Transverse colon (tissue), 4 donors: ENCODE measurements at regions of chr1 and their contacts with region 1.

Region 1: DNA sequence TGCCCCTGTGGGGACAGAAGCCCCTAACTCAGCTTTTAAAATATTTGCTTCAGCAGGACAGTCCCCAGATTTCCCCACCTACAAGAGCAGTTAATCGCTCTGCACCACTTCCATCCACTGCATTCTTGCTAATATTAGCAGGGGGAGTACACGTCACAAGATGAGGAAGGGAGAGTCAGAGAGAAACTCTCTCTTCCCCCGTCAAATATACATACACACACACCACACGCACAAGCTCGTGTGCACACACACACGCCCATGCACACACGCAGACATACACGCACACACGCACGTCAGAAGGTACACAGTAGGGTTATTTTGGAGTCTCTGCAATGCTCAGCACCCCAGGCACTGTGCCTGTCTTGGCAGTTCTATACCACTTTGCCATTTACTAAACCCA is 2.1 kb downstream of the CLCA1 start:
- DNase-seq: no peak
- H3K4me3 ChIP-seq: peak overlapping the region in 2 of 4 donors; percentile 8 to 10
- H3K27ac ChIP-seq: no peak overlapping the region
- H3K4me1 ChIP-seq: peaks cover 0 to 7% (median 0%) of the 10 kb centered on the region in 4 donors
- H3K27me3 ChIP-seq: no peaks in the 10 kb centered on the region
- CTCF ChIP-seq: no peak
- EP300 ChIP-seq: no peak
- POLR2A ChIP-seq: no peak

Region 2: DNA sequence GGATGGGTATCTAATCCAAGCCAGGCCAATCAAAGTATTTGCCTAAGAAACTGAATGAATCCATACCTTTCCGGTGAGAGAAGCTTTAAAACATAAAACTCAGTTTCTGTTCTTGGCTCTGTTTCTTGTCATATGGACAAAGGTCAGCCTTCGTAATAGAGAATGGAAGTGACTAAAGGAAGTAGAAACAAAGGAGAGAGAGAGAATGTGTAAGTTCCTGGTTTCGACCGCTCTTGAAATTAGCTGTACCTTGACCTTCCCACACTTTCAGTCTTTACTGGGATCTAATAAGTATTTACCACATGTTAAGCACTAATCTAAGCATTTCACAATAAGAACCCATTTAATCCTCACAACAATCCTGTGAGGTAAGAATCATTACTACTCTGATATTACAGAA is 56.4 kb after region 1 on chr1:
- in situ Hi-C with region 1: no loop called
- intact Hi-C with region 1: loop called (anchors 10 kb)
- DNase-seq: no peak
- H3K4me3 ChIP-seq: no peak overlapping the region
- H3K27ac ChIP-seq: peak overlapping the region; percentile 53 to 61 (median 57)
- H3K4me1 ChIP-seq: peaks cover 0 to 8% (median 0%) of the 10 kb centered on the region in 4 donors
- H3K27me3 ChIP-seq: no peaks in the 10 kb centered on the region
- CTCF ChIP-seq: no peak
- EP300 ChIP-seq: no peak
- POLR2A ChIP-seq: no peak

Region 3: GRCh38 chr1:86687595-86687994 is 216.7 kb after region 1 on chr1:
- in situ Hi-C with region 1: loop called in 2 of 4 experiments (anchors 25 kb)
- intact Hi-C with region 1: no loop called
- DNase-seq: no peak
- H3K4me3 ChIP-seq: no peak overlapping the region
- H3K27ac ChIP-seq: no peak overlapping the region
- H3K4me1 ChIP-seq: no peaks in the 10 kb centered on the region
- H3K27me3 ChIP-seq: no peaks in the 10 kb centered on the region
- CTCF ChIP-seq: peak in 3 of 5 experiments; percentile 22 to 43 (median 42)
- EP300 ChIP-seq: no peak
- POLR2A ChIP-seq: no peak